Spleen (tissue), 13 donors: ENCODE measurements at regions of chrX and their contacts with region 1.

Region 1: DNA sequence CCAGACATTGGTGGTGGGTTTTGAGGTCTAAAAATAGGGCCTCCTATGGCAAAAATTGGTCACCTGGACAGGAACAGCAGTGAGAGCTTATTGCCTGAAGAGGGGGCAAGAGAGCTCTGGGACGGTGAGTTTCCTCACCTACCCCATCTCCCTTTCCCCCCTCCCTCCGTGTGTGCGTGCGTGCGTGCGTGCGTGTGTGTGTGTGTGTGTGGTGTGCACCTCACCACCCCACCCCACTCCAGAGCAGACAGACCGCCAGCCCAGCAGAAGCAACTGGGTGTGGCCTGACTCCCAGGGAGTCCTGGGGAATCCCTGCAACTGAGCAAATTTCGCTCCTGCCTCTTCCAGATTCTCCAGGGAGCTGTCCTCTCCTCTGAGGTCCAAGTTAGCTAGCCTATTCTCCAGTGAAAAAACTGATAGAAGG is 44.7 kb downstream of the PRPS1 start:
- DNase-seq: peak; percentile 93
- H3K4me3 ChIP-seq: peak overlapping the region in 1 of 8 donors; percentile 66
- H3K27ac ChIP-seq: peak overlapping the region; percentile 77 to 95 (median 90)
- H3K4me1 ChIP-seq: peaks cover 7 to 52% (median 39%) of the 10 kb centered on the region in 6 donors
- H3K27me3 ChIP-seq: peaks cover 0 to 28% (median 0%) of the 10 kb centered on the region in 7 donors
- CTCF ChIP-seq: peak; percentile 40 to 86 (median 79)
- POLR2A ChIP-seq: peak in 1 of 3 donors; percentile 50

Region 2: DNA sequence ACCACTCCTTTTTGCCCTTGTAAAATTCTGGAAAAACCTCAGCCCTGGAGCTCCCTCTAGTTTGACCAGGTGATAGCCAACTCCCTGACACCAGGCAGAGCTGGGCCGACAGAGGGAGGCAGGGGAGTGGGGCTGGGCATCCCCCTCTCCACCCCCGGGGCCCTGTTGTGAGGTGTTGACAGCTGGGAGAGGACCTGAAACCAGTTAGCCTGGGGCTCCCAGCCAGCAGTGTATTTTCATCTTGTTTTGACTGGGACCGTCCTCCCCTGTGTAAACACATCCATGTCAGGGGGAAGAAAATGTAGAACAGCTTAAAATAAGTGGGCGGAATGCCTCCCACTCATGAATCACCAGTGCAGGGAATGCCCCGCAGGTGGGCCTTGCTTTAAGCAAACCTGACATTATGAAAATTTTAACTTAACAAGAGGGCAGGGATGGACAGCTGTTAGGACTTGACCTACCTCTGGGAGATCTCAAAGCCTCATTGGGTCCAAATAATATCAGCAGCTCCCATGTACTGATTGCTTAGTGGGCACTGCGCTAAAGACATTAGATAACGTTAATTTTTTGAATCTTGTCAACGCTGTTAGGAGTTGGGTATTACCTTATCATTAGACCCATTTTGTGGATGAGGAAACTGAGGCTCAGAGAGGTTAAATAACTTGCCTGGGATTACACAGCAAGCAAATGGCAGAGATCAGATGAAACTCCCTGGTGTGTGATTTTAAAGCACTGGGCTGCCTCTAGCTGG is 56.8 kb after region 1 on chrX:
- intact Hi-C with region 1: loop called (anchors 10 kb)
- DNase-seq: peak; percentile 63
- H3K4me3 ChIP-seq: no peak overlapping the region
- H3K27ac ChIP-seq: peak overlapping the region in 1 of 8 donors; percentile 21
- H3K4me1 ChIP-seq: peaks cover 0 to 22% (median 7%) of the 10 kb centered on the region in 6 donors
- H3K27me3 ChIP-seq: no peaks in the 10 kb centered on the region
- CTCF ChIP-seq: no peak
- POLR2A ChIP-seq: no peak

Region 3: GRCh38 chrX:107747596-107748161 is 74.7 kb after region 1 on chrX:
- intact Hi-C with region 1: no loop called
- DNase-seq: no peak
- H3K4me3 ChIP-seq: no peak overlapping the region
- H3K27ac ChIP-seq: peak overlapping the region in 5 of 8 donors; percentile 19 to 48 (median 39)
- H3K4me1 ChIP-seq: peaks cover 0 to 11% (median 5%) of the 10 kb centered on the region in 6 donors
- H3K27me3 ChIP-seq: peaks cover 0 to 8% (median 0%) of the 10 kb centered on the region in 7 donors
- CTCF ChIP-seq: no peak
- POLR2A ChIP-seq: no peak

Region 4: GRCh38 chrX:107776649-107777535 is 103.9 kb after region 1 on chrX:
- intact Hi-C with region 1: loop called (anchors 5 kb)
- DNase-seq: peak; percentile 86
- H3K4me3 ChIP-seq: peak overlapping the region in 6 of 8 donors; percentile 35 to 72 (median 46)
- H3K27ac ChIP-seq: peak overlapping the region in 6 of 8 donors; percentile 26 to 82 (median 74)
- H3K4me1 ChIP-seq: peaks cover 0 to 30% (median 9%) of the 10 kb centered on the region in 6 donors
- H3K27me3 ChIP-seq: peaks cover 0 to 32% (median 17%) of the 10 kb centered on the region in 7 donors
- CTCF ChIP-seq: peak; percentile 65 to 89 (median 85)
- POLR2A ChIP-seq: no peak